Activated T-helper 2 cell treated with anti-CD3 and anti-CD28 coated beads, Interferon-gamma antibody, Interleukin-2, Interleukin-4, amounts not matched to agents 10 μg/mL and 5 μg/mL and 100 μg/mL, durations not matched to agents 14 hours and 24 hours and 36 hours (primary cell): ENCODE measurements at regions of chr1 and their contacts with region 1.

Region 1: DNA sequence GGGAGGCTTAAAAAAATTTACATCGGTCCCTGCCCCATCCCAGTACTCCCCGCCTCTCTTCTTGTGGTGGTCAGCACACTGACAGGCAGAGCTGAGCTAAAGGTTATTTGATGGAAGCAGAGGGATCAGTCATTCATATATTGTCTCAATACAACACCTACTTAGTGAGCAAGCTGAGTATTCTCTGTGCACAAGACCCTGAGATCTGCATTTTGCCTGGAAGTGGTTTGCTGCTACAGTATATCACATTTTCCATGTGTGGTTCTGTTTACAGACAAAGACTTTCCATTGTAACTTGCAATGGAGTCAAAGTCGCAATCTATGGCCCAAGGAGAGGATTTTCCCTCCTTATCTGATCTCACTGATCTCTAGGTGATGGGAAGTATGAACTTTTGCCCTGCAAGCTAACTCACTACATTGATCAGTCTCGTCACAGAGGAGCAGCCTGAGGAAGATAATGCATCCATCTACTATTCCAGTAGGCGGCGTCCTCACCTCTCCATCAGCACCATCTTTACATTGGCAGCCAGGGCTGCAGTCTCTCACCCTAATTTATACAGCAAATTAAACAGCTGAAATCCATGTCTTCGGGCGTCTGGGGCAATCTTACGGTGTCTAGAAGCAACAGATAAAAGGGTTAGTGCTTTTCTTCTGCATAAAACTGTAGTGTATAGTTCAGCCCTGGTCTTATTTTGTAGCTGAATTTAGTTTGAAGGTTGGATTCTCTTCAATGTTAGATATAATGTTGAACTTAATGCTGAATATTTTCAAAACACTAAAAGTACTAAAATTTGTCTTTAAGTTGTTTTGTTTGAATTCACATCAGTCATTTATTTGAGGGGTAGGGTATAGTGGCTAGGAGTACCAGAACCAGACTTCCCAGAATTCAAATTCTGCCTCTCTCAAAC is 3.2 kb upstream of the TRAF5 start:
- DNase-seq: peak; percentile 59
- H3K4me3 Mint-ChIP-seq: no peak overlapping the region
- H3K27ac Mint-ChIP-seq: peak overlapping the region; percentile 74
- H3K4me1 Mint-ChIP-seq: peaks cover 57% of the 10 kb centered on the region
- H3K27me3 Mint-ChIP-seq: no peaks in the 10 kb centered on the region

Region 2: GRCh38 chr1:210792245-210793102 is 530.9 kb before region 1 on chr1:
- intact Hi-C with region 1: no loop called
- DNase-seq: no peak
- H3K4me3 Mint-ChIP-seq: no peak overlapping the region
- H3K27ac Mint-ChIP-seq: no peak overlapping the region
- H3K4me1 Mint-ChIP-seq: peaks cover 10% of the 10 kb centered on the region
- H3K27me3 Mint-ChIP-seq: no peaks in the 10 kb centered on the region

Region 3: DNA sequence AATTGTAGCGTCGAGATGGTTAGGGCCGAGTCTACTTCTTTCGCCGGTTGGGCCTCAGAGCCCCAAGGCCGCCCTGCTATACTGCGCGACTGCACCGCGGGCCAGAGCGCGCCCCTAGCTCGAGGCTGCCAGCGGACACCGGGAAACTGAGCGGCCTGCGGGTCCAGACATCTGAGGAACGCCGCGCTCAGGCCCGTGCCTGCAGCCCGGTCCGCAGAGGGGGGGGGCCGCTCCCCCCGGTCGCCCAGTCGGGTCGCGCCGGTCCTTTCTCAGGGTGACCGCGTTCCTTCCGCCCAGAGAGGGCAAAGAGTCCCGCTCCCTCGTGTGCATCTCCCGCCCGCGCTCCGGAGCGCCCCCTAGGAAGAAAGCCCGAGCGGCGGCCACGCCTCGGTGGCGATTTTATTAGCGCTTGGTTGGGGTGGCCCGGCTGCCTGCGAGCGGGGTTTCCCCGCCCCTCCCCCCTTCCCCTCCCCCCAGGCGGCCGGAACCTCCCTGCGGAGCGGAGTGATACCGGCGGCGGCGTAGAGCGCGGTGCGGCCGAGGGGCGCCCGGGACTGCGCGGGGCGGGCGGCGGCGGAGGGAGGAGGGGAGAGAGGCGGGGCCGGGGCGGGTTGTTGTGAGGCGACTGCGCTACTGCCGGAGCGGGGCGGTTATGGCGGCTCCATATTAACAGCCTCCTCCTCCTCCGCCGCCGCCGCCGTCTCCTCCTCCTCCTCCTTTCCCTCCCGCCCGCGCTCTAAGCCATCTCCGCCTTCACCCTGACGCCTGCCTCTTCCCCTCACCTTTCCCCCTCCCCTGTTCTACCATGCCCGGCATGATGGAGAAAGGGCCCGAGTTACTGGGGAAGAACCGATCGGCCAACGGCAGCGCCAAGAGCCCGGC is 64.4 kb before region 1 on chr1 and contains the start of gene RCOR3:
- intact Hi-C with region 1: loop called (anchors 1 kb)
- DNase-seq: peak; percentile 91
- H3K4me3 Mint-ChIP-seq: peak within 1 kb of the TSS; percentile 88
- H3K27ac Mint-ChIP-seq: peak within 1 kb of the TSS; percentile 92
- H3K4me1 Mint-ChIP-seq: peaks cover 19% of the 10 kb centered on the region
- H3K27me3 Mint-ChIP-seq: no peaks in the 10 kb centered on the region
- total RNA-seq, gene RCOR3: 42.3 and 45.0 TPM in 2 replicates

Region 4: DNA sequence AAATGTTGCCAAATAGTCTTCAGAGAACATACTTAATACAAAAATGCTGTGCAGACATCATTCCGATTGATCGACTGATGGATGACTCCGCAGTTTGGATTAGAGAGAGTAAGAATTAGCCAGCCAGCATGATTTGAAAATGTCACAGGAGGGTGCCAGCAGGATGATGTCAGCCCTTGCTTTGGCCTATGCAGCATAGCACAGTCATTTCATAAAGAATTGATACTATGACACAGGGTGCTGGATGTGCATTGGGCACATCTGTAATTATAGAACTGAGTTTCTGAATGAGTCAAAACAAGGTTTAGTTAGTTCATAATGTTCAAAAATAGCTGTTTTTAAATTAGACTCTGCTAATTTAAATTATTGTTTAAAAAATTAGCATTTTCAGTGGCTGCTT is 18.4 kb before region 1 on chr1:
- intact Hi-C with region 1: loop called (anchors 1 kb)
- DNase-seq: no peak
- H3K4me3 Mint-ChIP-seq: no peak overlapping the region
- H3K27ac Mint-ChIP-seq: peak overlapping the region; percentile 77
- H3K4me1 Mint-ChIP-seq: peaks cover 38% of the 10 kb centered on the region
- H3K27me3 Mint-ChIP-seq: no peaks in the 10 kb centered on the region

Region 5: GRCh38 chr1:211335522-211336157 is 12.2 kb after region 1 on chr1:
- intact Hi-C with region 1: no loop called
- DNase-seq: no peak
- H3K4me3 Mint-ChIP-seq: peak overlapping the region; percentile 70
- H3K27ac Mint-ChIP-seq: peak overlapping the region; percentile 86
- H3K4me1 Mint-ChIP-seq: peaks cover 69% of the 10 kb centered on the region
- H3K27me3 Mint-ChIP-seq: no peaks in the 10 kb centered on the region

Region 6: DNA sequence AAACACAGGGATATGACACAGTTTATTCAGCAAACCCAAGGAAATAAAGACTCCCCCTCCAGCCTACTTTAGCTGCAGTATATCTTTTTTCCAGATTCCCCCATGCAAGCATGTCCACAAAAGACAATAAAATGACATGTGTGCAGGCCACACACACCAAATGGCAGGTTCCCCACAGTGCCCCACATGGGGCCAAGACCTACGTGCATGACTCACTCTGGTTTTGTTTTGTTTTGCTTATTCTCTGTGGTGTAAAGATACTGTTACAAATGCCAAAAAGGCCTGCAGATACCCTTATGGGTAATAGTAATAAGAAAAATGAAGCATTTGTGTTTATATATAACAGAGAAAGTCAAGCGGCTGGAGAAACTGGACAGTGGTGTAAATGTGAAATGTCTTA is 97.0 kb after region 1 on chr1:
- intact Hi-C with region 1: loop called (anchors 2 kb)
- DNase-seq: no peak
- H3K4me3 Mint-ChIP-seq: no peak overlapping the region
- H3K27ac Mint-ChIP-seq: peak overlapping the region; percentile 36
- H3K4me1 Mint-ChIP-seq: peaks cover 31% of the 10 kb centered on the region
- H3K27me3 Mint-ChIP-seq: no peaks in the 10 kb centered on the region

Region 7: GRCh38 chr1:211578640-211579433 is 255.4 kb after region 1 on chr1 and contains the start of gene SLC30A1:
- intact Hi-C with region 1: loop called (anchors 5 kb)
- DNase-seq: peak; percentile 99
- H3K4me3 Mint-ChIP-seq: peak within 1 kb of the TSS; percentile 91
- H3K27ac Mint-ChIP-seq: peak within 1 kb of the TSS; percentile 86
- H3K4me1 Mint-ChIP-seq: peaks cover 41% of the 10 kb centered on the region
- H3K27me3 Mint-ChIP-seq: no peaks in the 10 kb centered on the region
- total RNA-seq, gene SLC30A1: 7.9 and 8.0 TPM in 2 replicates